HepG2 (cell line): ENCODE measurements at regions of chr1 and their contacts with region 1.

Region 1: DNA sequence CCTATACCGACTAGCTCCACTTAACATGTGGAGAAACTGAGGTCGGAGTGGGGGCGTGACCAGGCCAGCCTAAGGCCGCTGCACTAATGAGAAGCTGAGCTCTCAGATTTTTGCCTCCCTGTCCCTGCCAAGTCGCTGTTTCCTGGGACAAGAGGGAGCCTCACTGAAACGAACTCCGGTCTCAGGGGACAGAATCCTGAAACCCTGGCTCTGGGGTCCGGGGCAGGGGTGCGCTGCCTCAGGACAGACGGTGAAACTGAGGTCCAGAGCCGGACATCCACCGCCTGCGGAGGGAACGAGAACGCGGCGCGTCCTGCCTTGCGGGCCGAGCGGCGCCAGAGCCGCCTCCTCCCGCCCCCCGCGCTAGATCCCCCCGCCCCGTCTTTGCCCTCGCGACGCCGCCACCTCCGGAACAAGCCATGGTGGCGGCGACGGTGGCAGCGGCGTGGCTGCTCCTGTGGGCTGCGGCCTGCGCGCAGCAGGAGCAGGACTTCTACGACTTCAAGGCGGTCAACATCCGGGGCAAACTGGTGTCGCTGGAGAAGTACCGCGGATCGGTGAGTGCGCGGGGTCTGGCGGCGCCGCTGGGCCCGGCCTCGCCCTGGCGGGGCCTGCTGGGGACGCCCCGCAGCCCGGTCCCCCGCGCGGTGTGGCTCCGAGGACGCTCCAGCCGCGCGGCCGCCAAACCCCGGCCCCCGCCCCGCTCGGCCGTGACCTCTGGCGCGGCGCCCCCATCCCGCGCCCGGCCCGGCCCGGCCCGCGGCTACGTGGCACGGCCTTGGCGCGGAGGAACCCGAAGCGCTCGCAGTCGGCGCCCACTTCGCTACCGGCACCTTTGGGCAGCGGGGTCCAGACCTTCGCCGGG is at the start of gene GPX7:
- DNase-seq: no peak
- ATAC-seq: peak; percentile 37
- H3K4me3 ChIP-seq: peak within 1 kb of the TSS; percentile 49 to 69 (median 56); a peak in 5 of 6 replicates
- H3K27ac ChIP-seq: peak within 1 kb of the TSS; percentile 30
- H3K4me1 ChIP-seq: peaks cover 31% of the 10 kb centered on the region
- H3K27me3 ChIP-seq: no peaks in the 10 kb centered on the region
- CTCF ChIP-seq: no peak
- EP300 ChIP-seq: no peak
- POLR2A ChIP-seq: peak in 1 of 2 experiments; percentile 29; a peak in 1 of 4 replicates
- RAD21 ChIP-seq: no peak
- total RNA-seq, gene GPX7: 10.5 and 14.1 TPM in 2 replicates

Region 2: GRCh38 chr1:52659356-52659755 is 57.1 kb after region 1 on chr1:
- CTCF ChIA-PET with region 1: no interaction called
- POLR2A ChIA-PET with region 1: no interaction called
- in situ Hi-C with region 1: no loop called
- intact Hi-C with region 1: loop called (anchors 10 kb)
- DNase-seq: no peak
- ATAC-seq: no peak
- H3K4me3 ChIP-seq: no peak overlapping the region
- H3K27ac ChIP-seq: no peak overlapping the region
- H3K4me1 ChIP-seq: peaks cover 13% of the 10 kb centered on the region
- H3K27me3 ChIP-seq: peaks cover 0 to 2% of the 10 kb centered on the region in 2 experiments; a peak in 1 of 5 replicates
- CTCF ChIP-seq: no peak
- EP300 ChIP-seq: no peak
- POLR2A ChIP-seq: no peak
- RAD21 ChIP-seq: no peak